Endothelial cell of umbilical vein (primary cell): ENCODE measurements at regions of chr15 and their contacts with region 1.

Region 1: GRCh38 chr15:51192521-51193280 is 98.0 kb upstream of the TNFAIP8L3 start:
- DNase-seq: peak; percentile 85
- H3K4me3 ChIP-seq: no peak overlapping the region
- H3K27ac ChIP-seq: no peak overlapping the region
- H3K4me1 ChIP-seq: peaks cover 18% of the 10 kb centered on the region
- H3K27me3 ChIP-seq: peaks cover 33 to 45% of the 10 kb centered on the region in 2 experiments
- CTCF ChIP-seq: peak; percentile 93 to 94
- POLR2A ChIP-seq: no peak

Region 2: DNA sequence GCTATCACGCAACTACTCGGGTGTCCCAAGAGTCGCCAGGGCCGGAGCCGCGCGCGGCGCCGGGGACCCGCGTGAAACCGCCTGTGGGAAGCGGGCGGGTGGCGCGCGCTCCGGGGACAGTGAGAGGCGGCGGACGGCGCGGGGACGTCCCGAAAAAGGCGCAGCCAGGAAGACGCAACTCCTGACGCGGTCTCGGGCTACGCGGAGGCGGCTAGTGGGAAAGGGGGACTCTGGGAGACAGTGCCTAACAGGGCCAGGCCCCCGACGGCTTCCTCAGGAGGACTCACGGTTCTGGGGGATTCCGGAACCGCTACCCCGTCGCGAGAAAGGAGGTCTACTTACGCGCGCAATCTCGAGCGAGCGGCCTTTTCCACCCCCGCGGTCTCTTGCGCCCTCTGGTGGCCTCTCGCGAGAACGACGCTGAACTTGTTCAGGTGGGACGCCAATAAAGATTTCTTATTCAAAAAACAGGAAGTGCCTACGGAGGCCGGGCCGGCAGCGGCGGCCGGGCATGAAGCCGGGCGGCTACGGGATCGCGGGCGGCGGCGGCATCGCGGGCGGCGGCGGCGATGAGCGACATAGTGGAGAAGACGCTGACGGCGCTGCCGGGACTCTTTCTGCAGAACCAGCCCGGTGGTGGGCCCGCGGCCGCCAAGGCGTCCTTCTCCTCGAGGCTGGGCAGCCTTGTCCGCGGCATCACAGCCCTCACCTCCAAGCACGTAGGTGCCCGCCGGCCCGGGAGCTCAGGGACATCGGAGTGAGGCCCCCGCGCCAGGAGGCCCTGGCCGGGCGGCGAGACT is 284.3 kb before region 1 on chr15 and contains the start of gene AP4E1:
- CTCF ChIA-PET with region 1: interaction called, 7 read pairs
- POLR2A ChIA-PET with region 1: no interaction called
- dilution Hi-C with region 1: no loop called
- intact Hi-C with region 1: loop called (anchors 1 kb)
- DNase-seq: peak; percentile 96
- H3K4me3 ChIP-seq: peak within 1 kb of the TSS; percentile 95 to 99 (median 96)
- H3K27ac ChIP-seq: peak within 1 kb of the TSS; percentile 76
- H3K4me1 ChIP-seq: peaks cover 10% of the 10 kb centered on the region
- H3K27me3 ChIP-seq: no peaks in the 10 kb centered on the region
- CTCF ChIP-seq: peak; percentile 87 to 90
- POLR2A ChIP-seq: peak; percentile 14
- total RNA-seq, gene AP4E1: 9.8 and 10.1 TPM in 2 replicates

Region 3: DNA sequence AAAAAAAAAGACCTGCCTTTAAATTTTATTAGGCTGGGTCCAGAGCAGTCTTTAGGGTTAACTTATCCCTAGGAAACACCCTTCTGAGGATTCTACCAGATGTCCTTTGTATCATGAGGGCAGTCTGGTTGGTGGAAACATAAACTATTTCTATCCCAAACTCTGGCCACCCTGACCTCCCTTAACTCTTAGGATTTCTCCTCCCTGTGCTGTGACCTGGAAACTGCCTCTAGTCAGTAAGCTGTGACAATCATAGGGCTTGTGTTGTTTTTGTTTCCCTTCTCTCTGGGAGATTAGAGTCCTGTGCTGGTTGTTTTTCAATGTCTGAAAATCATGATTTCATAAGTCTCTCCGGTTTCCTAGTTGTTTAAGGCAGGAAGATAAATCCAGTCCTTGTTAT is 176.1 kb before region 1 on chr15:
- CTCF ChIA-PET with region 1: no interaction called
- POLR2A ChIA-PET with region 1: no interaction called
- dilution Hi-C with region 1: no loop called
- intact Hi-C with region 1: no loop called
- DNase-seq: no peak
- H3K4me3 ChIP-seq: no peak overlapping the region
- H3K27ac ChIP-seq: no peak overlapping the region
- H3K4me1 ChIP-seq: no peaks in the 10 kb centered on the region
- H3K27me3 ChIP-seq: no peaks in the 10 kb centered on the region
- CTCF ChIP-seq: no peak
- POLR2A ChIP-seq: no peak

Region 4: GRCh38 chr15:51093839-51094605 is 98.7 kb before region 1 on chr15:
- CTCF ChIA-PET with region 1: interaction called, 10 read pairs
- POLR2A ChIA-PET with region 1: no interaction called
- dilution Hi-C with region 1: no loop called
- intact Hi-C with region 1: loop called (anchors 1 kb)
- DNase-seq: peak; percentile 59
- H3K4me3 ChIP-seq: peak overlapping the region; percentile 75 to 95 (median 91)
- H3K27ac ChIP-seq: peak overlapping the region; percentile 61
- H3K4me1 ChIP-seq: peaks cover 78% of the 10 kb centered on the region
- H3K27me3 ChIP-seq: no peaks in the 10 kb centered on the region
- CTCF ChIP-seq: no peak
- POLR2A ChIP-seq: peak; percentile 38

Region 5: GRCh38 chr15:51172193-51172592 is 20.5 kb before region 1 on chr15:
- CTCF ChIA-PET with region 1: interaction called, 32 read pairs
- POLR2A ChIA-PET with region 1: no interaction called
- dilution Hi-C with region 1: no loop called
- intact Hi-C with region 1: no loop called
- DNase-seq: peak; percentile 50
- H3K4me3 ChIP-seq: no peak overlapping the region
- H3K27ac ChIP-seq: no peak overlapping the region
- H3K4me1 ChIP-seq: peaks cover 8% of the 10 kb centered on the region
- H3K27me3 ChIP-seq: peaks cover 5% of the 10 kb centered on the region in 2 experiments
- CTCF ChIP-seq: no peak
- POLR2A ChIP-seq: no peak

Region 6: GRCh38 chr15:51253366-51253765 is 60.7 kb after region 1 on chr15:
- CTCF ChIA-PET with region 1: no interaction called
- POLR2A ChIA-PET with region 1: no interaction called
- dilution Hi-C with region 1: no loop called
- intact Hi-C with region 1: no loop called
- DNase-seq: peak; percentile 21
- H3K4me3 ChIP-seq: no peak overlapping the region
- H3K27ac ChIP-seq: no peak overlapping the region
- H3K4me1 ChIP-seq: peaks cover 5% of the 10 kb centered on the region
- H3K27me3 ChIP-seq: peaks cover 30 to 35% of the 10 kb centered on the region in 2 experiments
- CTCF ChIP-seq: no peak
- POLR2A ChIP-seq: no peak

Region 7: DNA sequence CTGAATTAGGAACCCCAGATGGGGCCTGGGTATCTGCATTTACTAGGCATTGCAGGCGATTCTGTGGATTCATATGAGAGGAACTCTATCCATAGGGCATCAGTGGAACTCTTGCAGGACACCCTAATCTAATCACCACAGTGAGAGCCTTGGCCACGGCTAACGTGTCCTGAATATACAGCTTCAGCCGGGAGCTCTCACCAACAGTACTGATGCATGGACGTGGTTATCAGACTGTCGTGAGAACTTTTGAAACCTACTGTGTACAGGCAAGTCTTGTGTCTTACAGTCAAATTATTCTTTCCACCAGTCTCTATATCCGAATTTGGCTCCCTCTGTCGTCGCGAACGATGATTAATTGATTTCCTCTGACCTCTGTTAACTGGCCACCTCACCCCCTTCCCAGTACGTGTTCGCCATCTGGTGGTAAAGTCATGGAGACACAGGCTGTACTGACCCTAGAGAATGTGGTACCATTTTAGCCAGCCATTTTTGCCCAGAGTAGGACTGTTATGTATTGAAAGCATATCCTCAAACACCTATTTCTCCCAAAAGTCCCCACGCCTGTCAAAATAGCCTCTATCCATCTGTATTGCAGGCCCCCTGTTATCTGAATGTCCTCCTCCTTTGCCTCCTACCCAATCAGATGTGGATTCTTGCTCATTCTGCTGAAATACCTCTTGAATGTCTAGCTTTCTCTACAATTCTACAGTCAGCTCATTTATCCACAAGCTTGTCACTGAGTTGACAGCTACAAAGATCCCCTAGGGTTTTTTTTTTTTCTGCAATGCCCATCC is 188.5 kb after region 1 on chr15:
- CTCF ChIA-PET with region 1: interaction called, 18 read pairs
- POLR2A ChIA-PET with region 1: no interaction called
- dilution Hi-C with region 1: no loop called
- intact Hi-C with region 1: no loop called
- DNase-seq: peak; percentile 67
- H3K4me3 ChIP-seq: no peak overlapping the region
- H3K27ac ChIP-seq: no peak overlapping the region
- H3K4me1 ChIP-seq: no peaks in the 10 kb centered on the region
- H3K27me3 ChIP-seq: peaks cover 40 to 59% of the 10 kb centered on the region in 2 experiments
- CTCF ChIP-seq: peak; percentile 82 to 87
- POLR2A ChIP-seq: no peak